Ovary (tissue), 10 donors: ENCODE measurements at regions of chr16 and their contacts with region 1.

Region 1: DNA sequence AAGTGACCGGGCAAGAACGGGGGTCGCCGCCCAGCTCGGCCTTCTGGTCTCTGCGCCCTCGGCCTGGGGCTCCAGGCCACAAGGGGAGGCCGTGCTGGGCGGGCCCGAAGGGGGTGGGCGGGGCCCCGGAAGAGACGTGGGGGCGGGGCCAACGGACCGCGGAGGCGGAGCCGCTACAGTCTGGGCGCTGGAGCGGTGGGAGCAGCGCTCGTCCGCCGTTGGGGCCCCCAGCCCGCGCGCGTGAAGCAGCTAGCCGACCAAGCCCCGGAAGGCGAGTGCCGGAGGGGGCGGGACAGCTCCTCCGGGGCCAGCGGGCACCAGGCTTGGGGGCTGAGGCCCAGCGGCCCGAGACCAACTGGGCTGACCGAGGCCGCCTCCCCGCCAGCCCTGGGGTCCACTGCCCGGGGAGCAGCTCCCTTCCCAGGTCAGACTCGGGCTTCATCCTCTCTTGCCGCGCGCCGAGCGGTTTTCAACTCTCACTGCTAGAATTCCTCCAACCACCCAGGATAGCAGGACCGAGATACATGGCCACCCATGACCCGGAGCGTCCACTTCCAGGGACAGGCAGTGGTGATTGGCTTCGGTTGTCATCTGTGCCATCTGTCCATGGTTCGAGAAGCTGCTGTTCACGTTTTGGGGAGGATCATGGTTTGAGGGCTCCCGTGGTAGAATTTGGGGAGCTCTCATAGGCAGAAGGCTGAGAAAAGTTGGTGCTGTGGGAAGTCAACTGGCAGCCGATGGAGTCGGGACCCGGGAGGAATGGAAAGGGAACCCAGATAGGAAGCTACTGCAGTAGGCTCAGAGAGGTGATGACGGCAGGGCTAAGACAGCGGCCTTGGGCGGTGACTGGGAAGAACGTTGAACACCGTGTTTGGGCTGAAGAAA is 44.6 kb upstream of the LCMT1 start:
- DNase-seq: peak; percentile 84 to 93 (median 89)
- H3K4me3 ChIP-seq: peak overlapping the region; percentile 91
- H3K27ac ChIP-seq: peak overlapping the region; percentile 46 to 75
- H3K4me1 ChIP-seq: peaks cover 2% of the 10 kb centered on the region
- H3K27me3 ChIP-seq: no peaks in the 10 kb centered on the region
- CTCF ChIP-seq: no peak
- EP300 ChIP-seq: no peak
- POLR2A ChIP-seq: peak; percentile 75

Region 2: GRCh38 chr16:25111403-25112166 is 44.6 kb after region 1 on chr16 and contains the start of gene LCMT1:
- intact Hi-C with region 1: loop called in 2 of 4 experiments (anchors 2 to 5 kb)
- DNase-seq: peak; percentile 87 to 93 (median 89)
- H3K4me3 ChIP-seq: peak within 1 kb of the TSS; percentile 78
- H3K27ac ChIP-seq: no peak within 1 kb of the TSS
- H3K4me1 ChIP-seq: peaks cover under 1% of the 10 kb centered on the region
- H3K27me3 ChIP-seq: no peaks in the 10 kb centered on the region
- CTCF ChIP-seq: no peak
- EP300 ChIP-seq: no peak
- POLR2A ChIP-seq: peak; percentile 43
- total RNA-seq, gene LCMT1: 29.4 to 44.2 (median 38.3) TPM